PC-9 (cell line): ENCODE measurements at regions of chr4 and their contacts with region 1.

Region 1: DNA sequence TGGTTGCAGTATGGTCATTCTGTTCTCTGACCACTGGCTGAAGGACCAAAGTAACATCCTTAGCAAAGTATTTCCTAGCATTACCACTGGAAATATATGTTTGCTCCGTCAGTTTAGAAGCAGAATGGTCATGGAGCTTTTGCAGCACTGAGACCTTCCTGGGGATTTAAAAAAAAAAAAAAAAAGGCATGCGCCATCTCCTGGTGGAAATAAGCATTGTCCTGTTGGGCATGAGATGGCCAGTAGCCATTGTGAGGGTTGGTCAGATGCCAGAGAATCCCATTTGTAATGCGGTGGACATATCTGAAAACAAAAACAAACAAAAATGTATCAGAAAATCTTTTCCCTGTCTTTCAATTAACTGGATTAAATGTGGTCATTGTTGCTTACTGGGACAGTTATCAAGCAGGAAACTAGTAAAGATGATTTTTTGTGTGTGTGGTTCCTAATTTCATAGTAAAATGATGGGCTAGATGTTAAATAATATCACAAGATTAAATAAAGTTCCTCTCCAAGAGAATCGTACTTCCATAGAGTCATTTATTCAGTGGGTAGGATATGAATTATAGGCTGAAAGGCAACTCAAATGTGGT is 139.6 kb downstream of the SOWAHB start:
- DNase-seq: peak; percentile 24 to 43
- H3K4me3 ChIP-seq: no peak overlapping the region
- H3K27ac ChIP-seq: no peak overlapping the region
- H3K4me1 ChIP-seq: no peaks in the 10 kb centered on the region
- H3K27me3 ChIP-seq: no peaks in the 10 kb centered on the region
- CTCF ChIP-seq: peak; percentile 78

Region 2: GRCh38 chr4:76607266-76607799 is 151.1 kb before region 1 on chr4:
- CTCF ChIA-PET with region 1: no interaction called
- POLR2A ChIA-PET with region 1: no interaction called
- intact Hi-C with region 1: no loop called
- DNase-seq: no peak
- H3K4me3 ChIP-seq: no peak overlapping the region
- H3K27ac ChIP-seq: no peak overlapping the region
- H3K4me1 ChIP-seq: no peaks in the 10 kb centered on the region
- H3K27me3 ChIP-seq: no peaks in the 10 kb centered on the region
- CTCF ChIP-seq: no peak

Region 3: DNA sequence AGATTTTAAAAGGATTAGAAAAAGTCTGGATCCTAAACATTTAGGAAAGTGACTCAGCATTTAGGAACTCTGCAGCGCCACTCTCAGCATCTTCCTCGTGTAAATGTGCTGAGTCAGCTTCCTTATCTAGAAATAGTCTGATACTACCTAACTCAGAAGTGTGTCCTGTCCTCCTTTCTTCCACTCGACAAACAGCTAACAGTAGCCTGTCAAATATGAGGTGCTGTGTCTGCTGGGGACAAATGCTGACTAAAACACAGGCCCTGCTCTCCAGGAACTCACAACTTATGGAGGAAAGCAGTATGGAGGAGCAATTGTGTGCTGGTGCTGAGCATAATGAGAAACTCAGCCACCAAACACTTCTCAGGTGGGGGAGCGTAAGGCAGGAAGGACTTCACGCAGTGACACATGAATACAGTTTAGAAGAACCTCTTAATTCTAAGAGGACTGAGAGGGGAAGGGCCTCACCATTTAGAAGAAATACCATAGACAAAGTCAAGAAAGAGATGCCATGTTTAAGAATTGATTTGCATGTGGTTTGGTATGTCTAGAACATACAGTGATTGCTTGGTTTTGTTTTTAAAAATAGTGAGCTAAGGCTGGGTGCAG is 14.2 kb after region 1 on chr4:
- CTCF ChIA-PET with region 1: no interaction called
- POLR2A ChIA-PET with region 1: interaction called, 13 read pairs
- intact Hi-C with region 1: no loop called
- DNase-seq: no peak
- H3K4me3 ChIP-seq: no peak overlapping the region
- H3K27ac ChIP-seq: no peak overlapping the region
- H3K4me1 ChIP-seq: no peaks in the 10 kb centered on the region
- H3K27me3 ChIP-seq: no peaks in the 10 kb centered on the region
- CTCF ChIP-seq: no peak

Region 4: GRCh38 chr4:76803522-76803921 is 45.1 kb after region 1 on chr4:
- CTCF ChIA-PET with region 1: no interaction called
- POLR2A ChIA-PET with region 1: interaction called, 23 read pairs
- intact Hi-C with region 1: no loop called
- DNase-seq: peak; percentile 78 to 94
- H3K4me3 ChIP-seq: no peak overlapping the region
- H3K27ac ChIP-seq: peak overlapping the region; percentile 59
- H3K4me1 ChIP-seq: peaks cover 19% of the 10 kb centered on the region
- H3K27me3 ChIP-seq: no peaks in the 10 kb centered on the region
- CTCF ChIP-seq: no peak

Region 5: GRCh38 chr4:76867880-76868655 is 109.7 kb after region 1 on chr4:
- CTCF ChIA-PET with region 1: no interaction called
- POLR2A ChIA-PET with region 1: no interaction called
- intact Hi-C with region 1: loop called (anchors 5 kb)
- DNase-seq: peak; percentile 79 to 82
- H3K4me3 ChIP-seq: peak overlapping the region; percentile 38; the same call in 1 of the 2 replicates
- H3K27ac ChIP-seq: peak overlapping the region; percentile 75
- H3K4me1 ChIP-seq: peaks cover 5% of the 10 kb centered on the region; the same call in 1 of the 2 replicates
- H3K27me3 ChIP-seq: no peaks in the 10 kb centered on the region
- CTCF ChIP-seq: no peak